ENCODE measurements at regions of chr3 and their contacts with region 1.

Region 1: DNA sequence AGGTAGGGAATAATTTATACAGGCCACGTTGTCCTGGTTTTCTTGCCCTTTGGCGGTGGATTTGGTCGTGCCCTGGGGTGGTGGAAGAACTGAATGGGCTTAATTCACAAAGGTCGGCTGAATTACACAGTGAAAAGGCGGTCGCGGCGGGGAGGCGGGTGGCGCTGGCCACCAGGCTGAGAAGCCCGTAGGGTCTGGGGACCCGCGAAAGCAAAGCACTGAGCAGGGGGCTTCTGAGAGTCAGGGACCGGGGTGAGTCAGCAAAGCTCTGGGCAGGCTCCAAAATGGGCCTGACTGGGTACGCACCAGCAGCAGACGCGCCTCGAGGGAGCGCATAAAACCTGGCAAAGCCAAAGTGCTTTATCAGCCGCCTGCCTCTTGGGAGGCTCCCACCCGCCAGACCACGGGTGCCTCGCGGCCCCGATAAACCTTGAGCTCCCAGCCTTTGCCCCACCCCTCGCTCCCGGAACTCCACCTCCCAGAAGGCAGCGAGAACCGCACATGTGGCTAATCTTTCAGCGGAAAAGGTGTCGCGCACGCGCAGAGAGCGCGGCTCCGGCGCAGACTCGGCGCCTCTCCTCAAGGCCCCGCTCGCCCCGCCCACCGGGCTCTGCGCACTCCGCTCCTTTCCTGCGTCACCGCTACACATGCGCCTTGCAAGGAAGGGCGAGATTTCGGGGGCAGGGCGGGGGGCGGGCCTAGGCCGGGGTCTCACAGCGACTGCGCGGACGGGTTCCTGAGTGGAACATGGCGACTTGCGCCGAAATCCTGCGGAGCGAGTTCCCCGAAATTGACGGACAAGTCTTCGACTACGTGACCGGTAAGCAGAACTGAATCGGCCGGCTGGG is at the start of gene ABCF3:
- DNase-seq: peak; percentile 100
- H3K4me3 ChIP-seq: peak within 1 kb of the TSS; percentile 79
- H3K27ac ChIP-seq: peak within 1 kb of the TSS; percentile 95
- H3K4me1 ChIP-seq: peaks cover 39% of the 10 kb centered on the region
- H3K27me3 ChIP-seq: no peaks in the 10 kb centered on the region
- CTCF ChIP-seq: no peak
- total RNA-seq, gene ABCF3: 70.2 TPM

Region 2: GRCh38 chr3:184078851-184079250 is 106.8 kb before region 1 on chr3:
- intact Hi-C with region 1: no loop called
- DNase-seq: no peak
- H3K4me3 ChIP-seq: no peak overlapping the region
- H3K27ac ChIP-seq: no peak overlapping the region
- H3K4me1 ChIP-seq: no peaks in the 10 kb centered on the region
- H3K27me3 ChIP-seq: peaks cover under 1% of the 10 kb centered on the region
- CTCF ChIP-seq: no peak

Region 3: GRCh38 chr3:184249412-184250166 is 63.9 kb after region 1 on chr3 and contains the start of gene EEF1AKMT4:
- intact Hi-C with region 1: loop called (anchors 10 kb)
- DNase-seq: peak; percentile 95
- H3K4me3 ChIP-seq: peak within 1 kb of the TSS; percentile 75
- H3K27ac ChIP-seq: peak within 1 kb of the TSS; percentile 89
- H3K4me1 ChIP-seq: peaks cover 33% of the 10 kb centered on the region
- H3K27me3 ChIP-seq: no peaks in the 10 kb centered on the region
- CTCF ChIP-seq: peak; percentile 64
- total RNA-seq, gene EEF1AKMT4: 1.6 TPM

Measured in left ventricle myocardium inferior (tissue), 1 donor.